ENCODE measurements at regions of chr11 and their contacts with region 1.

Region 1: DNA sequence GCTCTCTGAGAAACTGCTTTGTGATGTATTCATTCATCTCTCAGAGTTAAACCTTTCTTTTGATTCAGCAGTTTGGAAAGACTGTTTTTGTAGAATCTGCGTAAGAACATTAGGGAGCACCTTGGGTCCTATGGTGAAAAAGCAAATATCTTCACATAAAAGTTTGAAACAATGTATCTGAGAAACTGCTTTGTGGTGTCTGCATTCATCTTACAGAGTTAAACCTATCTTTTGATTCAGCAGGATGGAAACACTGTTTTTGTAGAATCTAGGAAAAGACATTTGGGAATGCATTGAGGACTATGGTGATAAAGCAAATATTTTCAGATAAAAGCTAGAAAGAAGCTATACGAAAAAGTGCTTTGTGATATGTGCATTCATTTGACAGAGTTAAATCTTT is 361.3 kb downstream of the OR4C45 start:
- DNase-seq: no peak
- ATAC-seq: no peak
- H3K4me3 ChIP-seq: no peak overlapping the region
- H3K4me3 Mint-ChIP-seq: no peak overlapping the region
- H3K27ac ChIP-seq: no peak overlapping the region
- H3K27ac Mint-ChIP-seq: no peak overlapping the region
- H3K4me1 ChIP-seq: no peaks in the 10 kb centered on the region
- H3K4me1 Mint-ChIP-seq: no peaks in the 10 kb centered on the region
- H3K27me3 ChIP-seq: no peaks in the 10 kb centered on the region
- H3K27me3 Mint-ChIP-seq: no peaks in the 10 kb centered on the region

Region 2: DNA sequence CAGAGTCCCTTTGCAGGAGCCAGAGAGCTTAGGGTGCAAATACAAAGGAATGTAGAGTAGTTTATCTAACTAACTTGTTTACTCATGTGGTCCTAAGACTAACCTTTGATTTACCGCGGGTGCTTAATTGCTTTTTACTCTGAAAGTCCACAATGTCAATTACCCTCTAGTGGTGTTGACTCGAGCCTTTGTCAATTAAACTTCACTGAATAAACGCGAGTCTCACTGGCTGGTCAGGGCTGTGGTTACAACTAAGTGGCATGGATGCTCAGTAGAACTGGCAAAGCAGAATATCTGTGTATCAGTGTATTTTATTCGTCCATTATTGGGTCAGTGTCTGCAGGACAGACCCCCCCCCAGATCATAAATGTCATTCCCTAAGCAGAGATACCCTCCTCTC is 179.6 kb before region 1 on chr11:
- CTCF ChIA-PET with region 1: interaction called in 1 of 2 experiments, 14 read pairs
- POLR2A ChIA-PET with region 1: no interaction called
- DNase-seq: no peak
- ATAC-seq: no peak
- H3K4me3 ChIP-seq: no peak overlapping the region
- H3K4me3 Mint-ChIP-seq: no peak overlapping the region
- H3K27ac ChIP-seq: no peak overlapping the region
- H3K27ac Mint-ChIP-seq: no peak overlapping the region
- H3K4me1 ChIP-seq: no peaks in the 10 kb centered on the region
- H3K4me1 Mint-ChIP-seq: no peaks in the 10 kb centered on the region
- H3K27me3 ChIP-seq: no peaks in the 10 kb centered on the region
- H3K27me3 Mint-ChIP-seq: no peaks in the 10 kb centered on the region

Region 3: GRCh38 chr11:50247309-50247874 is 146.6 kb before region 1 on chr11:
- CTCF ChIA-PET with region 1: no interaction called
- POLR2A ChIA-PET with region 1: no interaction called
- DNase-seq: no peak
- ATAC-seq: no peak
- H3K4me3 ChIP-seq: no peak overlapping the region
- H3K4me3 Mint-ChIP-seq: no peak overlapping the region
- H3K27ac ChIP-seq: no peak overlapping the region
- H3K27ac Mint-ChIP-seq: no peak overlapping the region
- H3K4me1 ChIP-seq: no peaks in the 10 kb centered on the region
- H3K4me1 Mint-ChIP-seq: no peaks in the 10 kb centered on the region
- H3K27me3 ChIP-seq: no peaks in the 10 kb centered on the region
- H3K27me3 Mint-ChIP-seq: no peaks in the 10 kb centered on the region

Measured in T-cell (primary cell).